ENCODE measurements at regions of chr2 and their contacts with region 1.

Region 1: DNA sequence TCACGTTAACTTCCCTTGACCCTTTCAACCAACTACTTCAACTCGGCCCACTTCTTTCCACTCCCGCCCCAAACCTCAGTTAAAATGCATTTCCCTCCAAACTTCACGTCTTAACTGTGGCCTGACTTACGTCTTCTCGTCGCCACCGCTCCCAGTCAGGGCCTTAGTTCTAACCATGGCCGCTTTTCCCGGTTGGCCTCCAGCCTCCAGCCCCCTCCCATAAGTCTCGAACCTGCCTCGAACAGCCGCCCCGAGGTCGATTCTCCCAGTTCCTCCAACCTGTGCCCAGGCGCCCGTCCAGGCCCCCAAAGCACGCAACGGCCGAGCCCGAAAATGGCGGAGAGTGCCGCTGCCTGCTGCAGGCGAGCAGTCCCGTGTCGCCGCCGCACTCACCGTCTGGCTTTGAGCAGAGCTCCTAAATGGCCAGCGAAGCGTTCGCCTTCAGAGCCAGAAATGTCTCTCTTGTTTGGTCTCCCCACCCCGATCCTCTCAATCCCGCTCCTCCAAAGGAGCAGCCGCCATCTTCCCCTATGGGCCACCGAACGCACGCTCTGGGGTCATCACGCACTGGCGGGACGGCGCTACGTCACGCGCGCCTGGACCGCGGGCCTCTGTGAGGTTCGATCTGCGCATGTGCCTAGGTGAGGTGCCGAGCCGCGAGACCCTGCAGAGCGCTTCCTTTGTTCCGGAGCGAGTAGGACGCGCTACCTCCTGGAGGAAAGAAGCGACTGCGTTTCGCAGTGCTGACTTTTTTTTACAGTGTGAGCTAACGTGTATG is at the start of gene WDR33:
- DNase-seq: peak; percentile 96
- ATAC-seq: peak; percentile 97
- H3K4me3 ChIP-seq: peak within 1 kb of the TSS; percentile 66 to 99 (median 78)
- H3K4me3 Mint-ChIP-seq: peak within 1 kb of the TSS; percentile 97
- H3K27ac ChIP-seq: peak within 1 kb of the TSS; percentile 91 to 96
- H3K27ac Mint-ChIP-seq: peak within 1 kb of the TSS; percentile 99
- H3K4me1 ChIP-seq: peaks cover 30 to 37% of the 10 kb centered on the region in 2 donors
- H3K4me1 Mint-ChIP-seq: peaks cover 46% of the 10 kb centered on the region
- H3K27me3 ChIP-seq: no peaks in the 10 kb centered on the region
- H3K27me3 Mint-ChIP-seq: no peaks in the 10 kb centered on the region
- CTCF ChIP-seq: no peak
- total RNA-seq, gene WDR33: 95.2 and 101 TPM in 2 replicates

Region 2: GRCh38 chr2:127707890-127708648 is 102.7 kb before region 1 on chr2:
- CTCF ChIA-PET with region 1: no interaction called
- POLR2A ChIA-PET with region 1: interaction called, 15 read pairs
- intact Hi-C with region 1: no loop called
- DNase-seq: no peak
- ATAC-seq: no peak
- H3K4me3 ChIP-seq: no peak overlapping the region
- H3K4me3 Mint-ChIP-seq: no peak overlapping the region
- H3K27ac ChIP-seq: no peak overlapping the region
- H3K27ac Mint-ChIP-seq: no peak overlapping the region
- H3K4me1 ChIP-seq: peaks cover 9 to 12% of the 10 kb centered on the region in 2 donors
- H3K4me1 Mint-ChIP-seq: peaks cover 16% of the 10 kb centered on the region
- H3K27me3 ChIP-seq: no peaks in the 10 kb centered on the region
- H3K27me3 Mint-ChIP-seq: no peaks in the 10 kb centered on the region
- CTCF ChIP-seq: no peak

Region 3: GRCh38 chr2:127753374-127753773 is 57.4 kb before region 1 on chr2:
- CTCF ChIA-PET with region 1: no interaction called
- POLR2A ChIA-PET with region 1: no interaction called
- intact Hi-C with region 1: loop called (anchors 1 kb)
- DNase-seq: no peak
- ATAC-seq: no peak
- H3K4me3 ChIP-seq: no peak overlapping the region
- H3K4me3 Mint-ChIP-seq: no peak overlapping the region
- H3K27ac ChIP-seq: no peak overlapping the region
- H3K27ac Mint-ChIP-seq: no peak overlapping the region
- H3K4me1 ChIP-seq: peaks cover 13 to 16% of the 10 kb centered on the region in 2 donors
- H3K4me1 Mint-ChIP-seq: peaks cover 19% of the 10 kb centered on the region
- H3K27me3 ChIP-seq: no peaks in the 10 kb centered on the region
- H3K27me3 Mint-ChIP-seq: no peaks in the 10 kb centered on the region
- CTCF ChIP-seq: no peak

Region 4: GRCh38 chr2:127857265-127857808 is 46.5 kb after region 1 on chr2:
- CTCF ChIA-PET with region 1: interaction called, 4 read pairs
- POLR2A ChIA-PET with region 1: interaction called, 3 read pairs
- intact Hi-C with region 1: loop called (anchors 1 kb)
- DNase-seq: no peak
- ATAC-seq: no peak
- H3K4me3 ChIP-seq: peak overlapping the region; percentile 68 to 87 (median 80)
- H3K4me3 Mint-ChIP-seq: peak overlapping the region; percentile 88
- H3K27ac ChIP-seq: peak overlapping the region; percentile 41 to 85
- H3K27ac Mint-ChIP-seq: peak overlapping the region; percentile 57
- H3K4me1 ChIP-seq: peaks cover 16 to 36% of the 10 kb centered on the region in 2 donors
- H3K4me1 Mint-ChIP-seq: peaks cover 46% of the 10 kb centered on the region
- H3K27me3 ChIP-seq: no peaks in the 10 kb centered on the region
- H3K27me3 Mint-ChIP-seq: no peaks in the 10 kb centered on the region
- CTCF ChIP-seq: no peak

Measured in B cell (primary cell).